Activated CD8-positive, alpha-beta memory T cell treated with anti-CD3 and anti-CD28 coated beads, Interleukin-2, amount 10 ng/mL, durations not matched to agents 7 days and 5 days (primary cell): ENCODE measurements at regions of chr3 and their contacts with region 1.

Region 1: GRCh38 chr3:58414538-58415197 is 19.0 kb downstream of the PDHB start:
- DNase-seq: peak; percentile 68
- ATAC-seq: peak; percentile 78
- H3K4me3 Mint-ChIP-seq: no peak overlapping the region
- H3K27ac Mint-ChIP-seq: no peak overlapping the region
- H3K4me1 Mint-ChIP-seq: peaks cover 13% of the 10 kb centered on the region
- H3K27me3 Mint-ChIP-seq: no peaks in the 10 kb centered on the region

Region 2: DNA sequence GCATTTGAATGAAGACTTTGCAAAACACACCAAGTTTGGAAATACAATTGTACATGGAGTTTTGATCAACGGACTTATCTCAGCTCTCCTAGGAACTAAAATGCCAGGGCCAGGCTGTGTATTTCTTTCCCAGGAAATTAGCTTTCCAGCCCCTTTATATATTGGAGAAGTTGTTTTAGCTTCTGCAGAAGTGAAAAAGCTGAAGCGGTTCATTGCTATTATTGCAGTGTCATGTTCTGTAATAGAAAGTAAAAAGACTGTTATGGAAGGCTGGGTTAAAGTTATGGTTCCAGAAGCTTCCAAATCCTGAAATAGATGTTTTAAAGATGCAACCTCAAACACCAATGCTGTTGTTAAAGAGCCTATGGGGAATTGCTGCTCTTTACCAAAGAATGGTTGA is 96.9 kb before region 1 on chr3:
- CTCF ChIA-PET with region 1: interaction called, 24 read pairs
- DNase-seq: no peak
- ATAC-seq: no peak
- H3K4me3 Mint-ChIP-seq: no peak overlapping the region
- H3K27ac Mint-ChIP-seq: no peak overlapping the region
- H3K4me1 Mint-ChIP-seq: peaks cover 6% of the 10 kb centered on the region
- H3K27me3 Mint-ChIP-seq: no peaks in the 10 kb centered on the region

Region 3: DNA sequence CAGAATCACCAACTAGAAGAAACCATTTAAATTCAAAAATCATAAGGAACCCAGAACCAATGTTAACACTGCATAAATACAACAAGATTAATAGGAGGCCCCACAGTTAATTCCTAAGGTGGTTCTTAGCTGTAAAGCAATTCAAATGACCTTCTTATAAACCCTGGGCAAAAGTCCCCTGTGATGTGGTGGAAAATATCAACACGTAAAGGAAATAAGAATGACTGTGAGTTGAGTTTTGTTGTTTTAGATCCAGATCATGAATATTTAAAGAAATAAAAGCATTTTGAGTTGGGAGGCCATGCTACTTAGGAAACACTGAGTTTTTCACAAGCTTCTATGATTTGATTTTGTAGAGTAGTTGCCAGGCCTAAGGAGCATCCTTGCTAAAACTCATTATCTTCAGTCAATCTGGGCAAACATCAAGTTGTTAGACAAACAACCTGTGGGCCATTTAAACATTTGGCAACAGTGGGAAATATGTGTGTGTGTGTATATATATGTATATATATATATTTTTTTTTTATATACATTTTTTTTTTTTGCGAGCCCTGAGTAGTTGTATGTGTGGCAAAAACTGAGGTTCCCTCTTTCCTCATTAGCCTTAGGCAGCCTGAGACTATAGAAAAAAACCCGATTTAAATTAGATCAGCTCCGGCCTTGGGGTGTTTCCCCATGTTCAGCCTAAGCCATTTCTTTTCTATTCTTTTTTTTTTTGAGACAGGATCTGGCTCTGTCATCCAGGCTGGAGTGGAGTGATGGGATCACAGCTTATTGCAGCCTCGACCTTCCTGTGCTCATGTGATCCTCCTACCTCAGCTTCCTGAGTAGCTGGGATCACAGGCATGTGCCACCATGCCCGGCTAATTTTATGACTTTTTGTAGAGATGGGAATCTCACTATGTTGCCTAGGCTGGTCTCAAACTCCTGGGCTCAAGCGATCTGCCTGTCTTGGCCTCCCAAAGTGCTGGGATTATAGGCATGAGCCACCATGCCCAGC is 90.0 kb before region 1 on chr3:
- CTCF ChIA-PET with region 1: interaction called, 24 read pairs
- DNase-seq: no peak
- ATAC-seq: peak; percentile 52
- H3K4me3 Mint-ChIP-seq: no peak overlapping the region
- H3K27ac Mint-ChIP-seq: peak overlapping the region; percentile 66
- H3K4me1 Mint-ChIP-seq: peaks cover 29% of the 10 kb centered on the region
- H3K27me3 Mint-ChIP-seq: no peaks in the 10 kb centered on the region

Region 4: DNA sequence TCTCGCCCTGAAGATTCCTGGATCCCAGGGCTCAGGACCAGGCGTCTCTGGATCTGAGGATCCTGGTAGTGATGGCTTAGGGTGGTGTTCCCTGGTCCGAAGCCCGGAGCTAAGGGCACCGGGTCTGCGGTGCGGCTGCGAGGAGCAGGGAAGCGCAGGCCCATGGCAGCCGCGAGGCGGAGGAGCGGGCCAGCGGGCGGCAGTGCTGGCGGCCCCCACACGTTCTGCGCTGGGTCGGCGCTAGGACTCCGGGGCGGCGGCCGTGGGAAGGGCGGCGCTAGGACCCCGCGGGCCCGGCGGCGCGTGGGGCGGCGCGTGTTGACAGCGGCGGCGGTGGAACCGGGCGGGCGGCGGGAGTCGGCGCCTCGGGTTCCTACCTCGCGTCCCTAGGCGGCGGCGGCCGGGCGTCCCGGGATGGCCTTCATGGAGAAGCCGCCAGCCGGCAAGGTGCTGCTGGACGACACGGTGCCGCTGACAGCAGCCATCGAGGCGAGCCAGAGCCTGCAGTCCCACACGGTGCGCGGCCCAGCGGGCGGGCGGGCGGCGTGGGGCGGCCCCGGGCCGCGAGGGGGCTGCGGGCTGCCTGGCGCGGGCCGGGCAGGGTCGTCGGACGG is 82.0 kb before region 1 on chr3 and contains the start of gene PXK:
- CTCF ChIA-PET with region 1: interaction called, 17 read pairs
- DNase-seq: peak; percentile 84
- ATAC-seq: peak; percentile 89
- H3K4me3 Mint-ChIP-seq: peak within 1 kb of the TSS; percentile 95
- H3K27ac Mint-ChIP-seq: peak within 1 kb of the TSS; percentile 95
- H3K4me1 Mint-ChIP-seq: peaks cover 33% of the 10 kb centered on the region
- H3K27me3 Mint-ChIP-seq: no peaks in the 10 kb centered on the region
- total RNA-seq, gene PXK: 61.7 to 64.7 TPM

Region 5: GRCh38 chr3:58349792-58350626 is 64.7 kb before region 1 on chr3:
- CTCF ChIA-PET with region 1: interaction called, 11 read pairs
- DNase-seq: peak; percentile 80
- ATAC-seq: peak; percentile 68
- H3K4me3 Mint-ChIP-seq: peak overlapping the region; percentile 61
- H3K27ac Mint-ChIP-seq: peak overlapping the region; percentile 94
- H3K4me1 Mint-ChIP-seq: peaks cover 86% of the 10 kb centered on the region
- H3K27me3 Mint-ChIP-seq: no peaks in the 10 kb centered on the region

Region 6: DNA sequence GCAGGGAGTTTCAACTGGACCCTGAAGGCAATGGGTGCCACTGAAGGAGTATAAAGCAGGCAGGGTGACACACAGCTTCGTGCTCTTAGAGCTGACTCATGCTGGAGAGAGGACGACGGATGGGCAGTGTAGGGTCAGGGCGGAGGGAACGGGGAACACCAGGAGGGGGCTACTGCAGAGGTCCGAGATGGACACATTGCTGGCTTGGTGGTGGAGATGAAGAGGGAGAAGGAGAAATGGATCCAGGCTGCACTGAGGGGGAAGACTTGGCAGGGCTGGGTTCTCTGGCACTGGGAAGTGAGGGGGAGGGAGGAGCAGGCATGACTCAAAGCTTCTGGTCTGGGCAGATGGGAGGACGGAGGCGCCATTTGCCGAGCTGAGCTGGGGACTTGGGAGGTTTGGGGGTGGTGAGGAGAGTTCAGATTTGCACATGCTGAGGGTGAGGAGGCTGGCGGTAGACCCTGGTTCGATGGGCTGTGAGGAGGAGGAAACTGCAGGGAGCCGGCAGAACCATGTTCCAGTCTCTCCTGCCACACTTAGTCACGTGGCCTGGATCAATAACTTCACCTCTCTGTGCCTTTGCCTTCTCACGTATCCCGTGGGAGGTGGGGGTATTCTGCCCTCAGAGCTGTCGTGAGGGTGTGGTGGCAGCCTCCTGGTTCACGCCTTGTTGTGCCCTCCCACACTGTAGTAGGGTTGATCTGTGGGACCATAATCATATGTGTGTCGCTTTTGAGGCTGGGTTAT is 72.6 kb after region 1 on chr3:
- CTCF ChIA-PET with region 1: no interaction called
- DNase-seq: no peak
- ATAC-seq: no peak
- H3K4me3 Mint-ChIP-seq: no peak overlapping the region
- H3K27ac Mint-ChIP-seq: no peak overlapping the region
- H3K4me1 Mint-ChIP-seq: peaks cover 18% of the 10 kb centered on the region
- H3K27me3 Mint-ChIP-seq: peaks cover 61% of the 10 kb centered on the region